Adrenal gland (tissue), 19 donors: ENCODE measurements at regions of chr17 and their contacts with region 1.

Region 1: DNA sequence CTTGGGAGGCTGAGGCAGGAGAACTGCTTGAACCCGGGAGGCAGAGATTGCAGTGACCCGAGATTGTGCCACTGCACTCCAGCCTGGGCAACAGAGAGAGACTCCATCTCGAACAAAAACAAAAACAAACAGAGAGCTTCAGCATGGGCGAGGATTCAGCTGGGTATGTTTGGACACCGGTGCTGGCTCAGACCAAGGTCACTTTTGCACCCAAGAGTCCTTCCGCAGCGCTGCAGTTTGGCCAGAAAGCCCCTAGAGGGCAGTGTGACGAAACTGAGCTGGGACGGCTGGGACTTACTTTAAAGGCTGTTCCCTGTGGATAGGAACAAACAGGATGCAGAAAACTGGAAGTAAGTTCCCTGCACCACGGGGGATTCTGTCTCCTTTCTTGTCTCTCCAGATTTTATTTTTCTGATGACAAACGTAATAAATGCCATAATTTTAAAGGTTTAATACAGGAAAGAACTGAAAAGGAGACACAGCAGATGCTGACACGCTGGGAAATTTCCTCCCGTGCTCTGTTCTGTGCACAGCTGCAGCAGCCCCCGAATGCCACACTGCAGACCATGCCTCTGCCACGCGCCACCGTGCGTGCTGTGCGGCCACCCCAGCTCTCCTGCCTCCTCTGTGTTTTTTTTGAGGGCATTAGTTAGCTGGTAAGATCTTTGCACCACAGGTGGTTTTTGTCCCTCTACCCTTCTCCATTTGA is 25.2 kb upstream of the USP36 start:
- DNase-seq: peak; percentile 88 to 96 (median 92)
- H3K4me3 ChIP-seq: no peak overlapping the region
- H3K27ac ChIP-seq: peak overlapping the region in 2 of 5 donors; percentile 13 to 61
- H3K4me1 ChIP-seq: peaks cover 4 to 9% of the 10 kb centered on the region in 2 donors
- H3K27me3 ChIP-seq: no peaks in the 10 kb centered on the region
- CTCF ChIP-seq: peak; percentile 91 to 94 (median 93)
- POLR2A ChIP-seq: no peak

Region 2: DNA sequence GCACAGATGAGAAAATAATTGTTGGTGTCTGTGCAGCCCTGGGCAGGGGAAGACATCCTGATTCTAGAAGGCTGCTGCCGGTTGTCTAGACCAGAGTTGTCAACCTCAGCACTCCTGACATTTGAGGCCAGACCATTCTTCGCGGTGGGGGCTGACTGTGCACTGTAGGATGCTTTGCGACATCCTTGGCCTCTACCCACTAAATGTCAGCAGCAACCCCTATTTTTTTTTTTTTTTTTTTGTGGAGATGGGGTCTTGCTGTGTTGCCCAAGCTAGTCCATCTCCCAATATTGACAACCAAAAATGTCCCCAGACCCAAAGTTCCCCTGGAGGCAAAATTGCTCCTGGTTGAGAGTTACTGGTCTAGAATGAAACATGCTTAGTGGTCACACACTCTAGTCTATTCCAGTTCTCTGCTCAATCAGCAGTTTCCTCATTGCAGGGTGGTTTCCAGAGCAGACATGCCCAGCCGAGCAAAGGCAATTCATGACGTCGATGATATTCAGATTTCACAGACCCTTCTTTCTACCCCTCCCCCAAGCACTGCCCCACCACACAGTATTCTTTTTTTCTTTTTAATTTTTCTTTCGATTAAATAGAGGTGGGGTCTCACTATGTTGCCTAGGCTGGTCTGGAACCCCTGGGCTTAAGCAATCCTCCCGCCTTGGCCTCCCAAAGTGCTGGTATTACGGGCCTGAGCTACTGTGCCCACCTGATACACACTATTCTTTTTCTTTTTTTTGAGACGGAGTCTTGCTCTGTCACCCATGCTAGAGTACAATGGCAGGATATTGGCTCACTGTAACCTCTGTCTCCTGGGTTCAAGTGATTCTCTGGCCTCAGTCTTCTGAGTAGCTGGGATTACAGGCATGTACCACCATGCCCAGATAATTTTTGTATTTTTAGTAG is 710.7 kb before region 1 on chr17:
- intact Hi-C with region 1: no loop called
- DNase-seq: no peak
- H3K4me3 ChIP-seq: no peak overlapping the region
- H3K27ac ChIP-seq: no peak overlapping the region
- H3K4me1 ChIP-seq: no peaks in the 10 kb centered on the region
- H3K27me3 ChIP-seq: no peaks in the 10 kb centered on the region
- CTCF ChIP-seq: no peak
- POLR2A ChIP-seq: no peak

Region 3: GRCh38 chr17:78828470-78829185 is 37.2 kb before region 1 on chr17:
- intact Hi-C with region 1: no loop called
- DNase-seq: peak in 1 of 7 donors; percentile 23
- H3K4me3 ChIP-seq: no peak overlapping the region
- H3K27ac ChIP-seq: peak overlapping the region in 1 of 5 donors; percentile 84
- H3K4me1 ChIP-seq: no peaks in the 10 kb centered on the region
- H3K27me3 ChIP-seq: no peaks in the 10 kb centered on the region
- CTCF ChIP-seq: peak in 1 of 6 experiments; percentile 12
- POLR2A ChIP-seq: no peak

Region 4: DNA sequence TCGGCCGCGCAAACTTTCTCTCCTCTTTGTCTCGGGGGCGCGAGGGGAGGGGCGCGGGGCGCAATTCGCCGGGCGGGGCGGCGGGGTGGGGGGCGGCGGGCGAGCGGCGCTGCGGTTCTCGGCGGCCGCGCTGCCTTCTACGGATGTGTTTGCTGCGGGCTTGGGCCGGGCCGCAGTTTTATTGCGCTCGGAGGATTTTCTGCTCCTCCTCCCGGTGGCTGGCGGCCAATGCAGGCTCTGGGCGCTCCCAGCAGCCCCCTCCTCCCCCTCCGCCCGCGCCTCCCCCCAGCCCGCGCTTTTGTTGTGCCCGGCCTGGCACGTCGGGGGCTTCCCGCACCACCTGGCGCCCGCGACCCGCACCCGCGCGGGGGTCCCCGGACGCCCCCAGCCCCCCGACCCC is 59.4 kb after region 1 on chr17 and contains the start of gene TIMP2:
- intact Hi-C with region 1: no loop called
- DNase-seq: peak; percentile 83 to 92 (median 89)
- H3K4me3 ChIP-seq: peak within 1 kb of the TSS in 3 of 4 donors; percentile 48 to 80 (median 62)
- H3K27ac ChIP-seq: peak within 1 kb of the TSS in 4 of 5 donors; percentile 61 to 96 (median 82)
- H3K4me1 ChIP-seq: peaks cover 23 to 44% of the 10 kb centered on the region in 2 donors
- H3K27me3 ChIP-seq: no peaks in the 10 kb centered on the region
- CTCF ChIP-seq: peak in 3 of 6 experiments; percentile 15 to 45 (median 36)
- POLR2A ChIP-seq: peak; percentile 68 to 69
- total RNA-seq, gene TIMP2: 20.2 to 275 (median 210) TPM

Region 5: DNA sequence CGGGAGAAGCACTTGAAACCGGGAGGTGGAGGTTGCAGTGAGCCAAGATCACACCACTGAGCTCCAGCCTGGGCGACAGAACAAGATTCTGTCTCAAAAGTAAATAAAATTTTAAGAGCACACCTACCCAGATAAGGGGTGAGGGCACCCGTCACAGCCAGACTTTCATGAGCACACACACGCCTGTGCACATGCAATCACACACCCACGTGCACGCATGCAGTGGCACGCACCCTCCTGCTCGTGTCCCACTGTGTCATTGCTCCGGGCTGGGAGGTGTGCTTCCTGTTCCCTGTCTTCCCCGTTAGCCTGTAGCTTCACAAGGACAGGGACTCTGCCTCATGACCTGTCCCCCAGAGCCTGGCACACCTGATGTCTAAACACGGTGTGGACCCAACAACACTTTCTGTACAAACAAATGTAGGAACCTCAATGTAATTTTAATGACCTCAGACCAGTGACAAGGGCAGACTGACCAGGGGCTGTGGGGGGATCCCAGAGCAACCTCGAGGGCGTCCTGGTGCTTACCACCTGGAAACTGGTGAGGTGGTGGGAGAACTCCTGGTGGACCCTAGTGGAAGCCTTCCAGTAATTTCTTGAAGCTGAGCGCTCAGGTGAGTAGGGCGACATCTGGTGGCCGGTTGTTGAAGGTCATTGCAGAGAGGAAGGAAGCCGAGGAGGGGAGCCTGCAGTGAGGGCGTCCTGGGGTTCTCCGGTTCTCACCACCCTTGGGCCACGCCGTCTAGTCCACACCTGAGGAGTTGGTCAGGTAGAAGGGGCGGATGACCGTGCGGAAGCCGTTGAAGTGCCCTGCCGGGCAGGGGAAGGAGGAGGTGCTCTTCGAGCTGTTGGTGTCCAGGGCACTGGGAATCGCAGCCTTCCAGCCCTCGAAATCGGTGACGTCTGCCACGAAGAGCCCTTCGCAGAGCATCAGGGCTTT is 105.3 kb after region 1 on chr17:
- intact Hi-C with region 1: loop called (anchors 2 to 5 kb)
- DNase-seq: peak; percentile 53 to 93 (median 85)
- H3K4me3 ChIP-seq: no peak overlapping the region
- H3K27ac ChIP-seq: peak overlapping the region in 3 of 5 donors; percentile 33 to 53 (median 45)
- H3K4me1 ChIP-seq: peaks cover 0 to 25% of the 10 kb centered on the region in 2 donors
- H3K27me3 ChIP-seq: no peaks in the 10 kb centered on the region
- CTCF ChIP-seq: peak; percentile 79 to 95 (median 91)
- POLR2A ChIP-seq: no peak